T-cell (primary cell): ENCODE measurements at regions of chr1 and their contacts with region 1.

Region 1: DNA sequence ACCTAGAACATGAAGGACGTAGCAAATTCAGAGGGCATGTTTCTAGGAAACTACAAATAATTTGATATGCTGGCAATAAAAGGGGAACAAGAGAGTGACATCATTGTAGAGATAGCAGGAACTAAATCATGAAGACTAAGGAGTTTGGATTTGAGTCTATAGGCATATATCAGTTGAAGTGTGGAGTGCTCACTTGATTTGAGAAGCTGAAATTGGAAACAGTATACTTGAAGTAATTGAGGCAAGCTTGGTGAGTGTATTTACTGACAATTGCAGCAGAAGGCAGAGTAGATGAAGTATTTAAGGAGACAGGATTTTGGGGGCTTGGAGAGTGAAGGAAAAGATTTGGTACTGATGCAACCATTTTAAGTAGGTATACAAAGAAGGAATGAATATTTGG is 6.4 kb upstream of the TMCO2 start:
- DNase-seq: no peak
- ATAC-seq: peak in 1 of 4 experiments; percentile 38
- H3K4me3 ChIP-seq: no peak overlapping the region
- H3K4me3 Mint-ChIP-seq: no peak overlapping the region
- H3K27ac ChIP-seq: peak overlapping the region; percentile 61
- H3K27ac Mint-ChIP-seq: peak overlapping the region; percentile 77 to 81
- H3K4me1 ChIP-seq: peaks cover 2 to 5% of the 10 kb centered on the region in 2 experiments
- H3K4me1 Mint-ChIP-seq: peaks cover 14 to 17% (median 16%) of the 10 kb centered on the region in 3 donors
- H3K27me3 ChIP-seq: no peaks in the 10 kb centered on the region
- H3K27me3 Mint-ChIP-seq: no peaks in the 10 kb centered on the region

Region 2: GRCh38 chr1:40204856-40205255 is 36.5 kb before region 1 on chr1:
- CTCF ChIA-PET with region 1: no interaction called
- POLR2A ChIA-PET with region 1: interaction called in 1 of 2 experiments, 12 read pairs
- DNase-seq: no peak
- ATAC-seq: no peak
- H3K4me3 ChIP-seq: no peak overlapping the region
- H3K4me3 Mint-ChIP-seq: no peak overlapping the region
- H3K27ac ChIP-seq: no peak overlapping the region
- H3K27ac Mint-ChIP-seq: no peak overlapping the region
- H3K4me1 ChIP-seq: no peaks in the 10 kb centered on the region
- H3K4me1 Mint-ChIP-seq: peaks cover 9 to 11% (median 10%) of the 10 kb centered on the region in 3 donors
- H3K27me3 ChIP-seq: no peaks in the 10 kb centered on the region
- H3K27me3 Mint-ChIP-seq: no peaks in the 10 kb centered on the region

Region 3: DNA sequence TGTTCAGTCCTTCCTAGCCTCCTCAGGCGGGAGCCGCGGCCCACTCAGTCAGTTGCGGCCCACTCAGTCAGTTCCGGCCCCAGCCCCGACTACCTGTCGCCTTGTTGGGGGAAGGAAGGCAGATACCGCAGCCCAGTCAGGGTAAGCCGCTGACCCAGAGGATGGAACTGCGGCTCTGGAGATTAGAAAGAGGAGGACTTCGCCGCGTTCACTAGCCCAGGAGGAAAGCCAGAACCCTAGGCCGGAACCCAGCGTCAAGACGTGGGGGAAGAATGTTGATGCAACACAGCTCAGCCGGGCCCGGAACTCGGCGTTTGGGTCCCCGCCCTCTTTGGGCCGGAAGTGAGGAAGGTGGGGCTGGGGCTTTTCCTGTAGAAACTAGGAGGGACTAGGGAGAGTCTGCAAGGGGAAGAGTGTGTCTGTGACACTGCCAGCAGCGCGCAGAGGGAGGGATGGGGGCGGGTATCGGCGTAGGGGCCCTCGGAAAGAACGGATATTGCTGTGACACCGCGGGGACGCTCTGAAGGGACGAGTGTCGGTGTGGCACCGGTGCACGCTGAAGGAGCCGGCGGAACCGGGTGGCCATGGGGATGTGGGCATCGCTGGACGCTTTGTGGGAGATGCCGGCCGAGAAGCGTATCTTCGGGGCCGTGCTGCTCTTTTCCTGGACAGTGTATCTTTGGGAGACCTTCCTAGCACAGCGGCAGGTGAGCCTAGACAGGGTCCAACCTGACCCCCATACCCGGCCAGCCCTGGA is 16.5 kb after region 1 on chr1 and contains the start of gene ZMPSTE24:
- CTCF ChIA-PET with region 1: interaction called in 1 of 2 experiments, 6 read pairs
- POLR2A ChIA-PET with region 1: interaction called in 1 of 2 experiments, 12 read pairs
- DNase-seq: peak; percentile 90 to 98 (median 97)
- ATAC-seq: peak; percentile 96 to 97 (median 97)
- H3K4me3 ChIP-seq: peak within 1 kb of the TSS; percentile 94 to 98
- H3K4me3 Mint-ChIP-seq: peak within 1 kb of the TSS; percentile 94 to 99 (median 98)
- H3K27ac ChIP-seq: peak within 1 kb of the TSS; percentile 100
- H3K27ac Mint-ChIP-seq: peak within 1 kb of the TSS; percentile 100
- H3K4me1 ChIP-seq: peaks cover 13 to 20% of the 10 kb centered on the region in 2 experiments
- H3K4me1 Mint-ChIP-seq: peaks cover 35 to 64% (median 59%) of the 10 kb centered on the region in 3 donors
- H3K27me3 ChIP-seq: no peaks in the 10 kb centered on the region
- H3K27me3 Mint-ChIP-seq: no peaks in the 10 kb centered on the region
- total RNA-seq, gene ZMPSTE24: 12.4 to 16.9 (median 15.2) TPM

Region 4: DNA sequence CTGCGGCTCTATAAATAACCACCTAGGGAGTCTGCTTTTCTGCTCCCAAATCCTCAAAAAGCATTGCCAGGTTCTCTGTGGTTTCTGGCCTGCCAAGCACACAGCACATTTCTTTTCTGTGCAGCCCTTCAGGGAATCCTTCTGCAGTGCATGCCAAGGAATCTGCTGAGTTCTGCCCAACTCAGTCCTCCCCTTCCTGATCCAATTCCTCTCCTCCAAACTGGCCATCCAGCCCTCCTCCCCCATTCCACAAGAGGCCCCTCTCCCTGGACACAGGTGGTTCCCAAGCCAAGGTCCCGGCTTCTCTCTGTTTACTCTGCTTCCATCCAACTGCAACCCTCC is 1615.6 kb after region 1 on chr1:
- CTCF ChIA-PET with region 1: no interaction called
- POLR2A ChIA-PET with region 1: no interaction called
- DNase-seq: no peak
- ATAC-seq: no peak
- H3K4me3 ChIP-seq: no peak overlapping the region
- H3K4me3 Mint-ChIP-seq: no peak overlapping the region
- H3K27ac ChIP-seq: no peak overlapping the region
- H3K27ac Mint-ChIP-seq: no peak overlapping the region
- H3K4me1 ChIP-seq: no peaks in the 10 kb centered on the region
- H3K4me1 Mint-ChIP-seq: peaks cover 2 to 16% (median 5%) of the 10 kb centered on the region in 3 donors
- H3K27me3 ChIP-seq: no peaks in the 10 kb centered on the region
- H3K27me3 Mint-ChIP-seq: no peaks in the 10 kb centered on the region